Activated CD4-positive, alpha-beta T cell treated with anti-CD3 and anti-CD28 coated beads for 36 hours (primary cell): ENCODE measurements at regions of chr2 and their contacts with region 1.

Region 1: DNA sequence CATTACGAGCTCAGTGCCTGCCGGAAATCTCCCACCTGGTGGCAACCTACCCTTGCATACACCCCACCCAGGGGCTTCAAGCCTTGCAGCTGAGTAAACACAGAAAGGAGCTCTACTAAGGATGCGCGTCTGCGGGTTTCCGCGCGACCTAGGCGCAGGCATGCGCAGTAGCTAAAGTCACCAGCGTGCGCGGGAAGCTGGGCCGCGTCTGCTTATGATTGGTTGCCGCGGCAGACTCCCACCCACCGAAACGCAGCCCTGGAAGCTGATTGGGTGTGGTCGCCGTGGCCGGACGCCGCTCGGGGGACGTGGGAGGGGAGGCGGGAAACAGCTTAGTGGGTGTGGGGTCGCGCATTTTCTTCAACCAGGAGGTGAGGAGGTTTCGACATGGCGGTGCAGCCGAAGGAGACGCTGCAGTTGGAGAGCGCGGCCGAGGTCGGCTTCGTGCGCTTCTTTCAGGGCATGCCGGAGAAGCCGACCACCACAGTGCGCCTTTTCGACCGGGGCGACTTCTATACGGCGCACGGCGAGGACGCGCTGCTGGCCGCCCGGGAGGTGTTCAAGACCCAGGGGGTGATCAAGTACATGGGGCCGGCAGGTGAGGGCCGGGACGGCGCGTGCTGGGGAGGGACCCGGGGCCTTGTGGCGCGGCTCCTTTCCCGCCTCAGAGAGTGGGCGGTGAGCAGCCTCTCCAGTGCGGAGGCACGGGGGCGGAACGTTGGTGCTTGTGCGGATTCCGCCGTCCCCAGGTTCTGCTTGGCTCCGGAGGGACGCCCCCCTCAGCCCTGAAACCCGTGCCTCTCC is at the start of gene MSH2:
- DNase-seq: peak; percentile 96
- ATAC-seq: peak; percentile 95
- H3K4me3 Mint-ChIP-seq: peak within 1 kb of the TSS; percentile 84
- H3K27ac Mint-ChIP-seq: peak within 1 kb of the TSS; percentile 98
- H3K4me1 Mint-ChIP-seq: peaks cover 35% of the 10 kb centered on the region
- H3K27me3 Mint-ChIP-seq: no peaks in the 10 kb centered on the region
- total RNA-seq, gene MSH2: 61.0 to 65.2 TPM

Region 2: DNA sequence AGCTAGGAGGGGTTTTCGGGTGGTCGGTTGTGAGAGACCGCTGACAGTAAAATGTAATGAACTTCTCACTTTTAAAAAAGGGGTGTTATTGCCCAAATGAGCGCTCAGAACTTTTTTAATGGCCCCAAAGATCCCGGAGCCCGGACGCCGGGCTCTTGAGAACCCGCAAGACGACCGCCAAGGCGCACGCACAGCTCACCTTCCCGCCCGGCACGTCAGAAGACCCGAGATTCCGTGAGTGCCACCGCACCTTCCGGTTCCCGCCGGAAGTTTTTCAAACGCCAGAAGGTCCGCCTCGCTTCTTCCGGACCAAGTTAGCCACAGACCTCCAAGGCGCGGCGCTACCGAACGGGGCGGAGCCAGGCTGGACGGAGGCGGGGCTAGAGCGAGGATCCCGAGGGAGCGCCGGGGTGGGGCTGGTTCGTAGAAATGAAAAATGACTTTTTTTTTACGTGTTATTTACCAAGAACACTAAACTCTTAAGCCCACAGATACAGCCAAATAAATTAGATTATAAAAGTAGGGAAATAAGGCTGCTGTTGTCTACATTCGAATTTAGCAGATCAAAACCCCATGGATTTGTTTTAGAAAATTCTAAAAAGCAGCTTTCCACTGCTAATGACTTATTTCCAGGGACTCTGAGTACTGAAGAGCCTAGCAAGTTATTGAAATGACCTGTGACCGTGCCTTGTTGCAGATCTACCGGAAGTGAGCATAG is 1791.8 kb before region 1 on chr2 and contains the start of gene SRBD1:
- CTCF ChIA-PET with region 1: no interaction called
- POLR2A ChIA-PET with region 1: no interaction called
- intact Hi-C with region 1: loop called in 1 of 2 experiments (anchors 5 kb)
- DNase-seq: peak; percentile 96
- ATAC-seq: peak; percentile 97
- H3K4me3 Mint-ChIP-seq: peak within 1 kb of the TSS; percentile 93
- H3K27ac Mint-ChIP-seq: peak within 1 kb of the TSS; percentile 94
- H3K4me1 Mint-ChIP-seq: peaks cover 19% of the 10 kb centered on the region
- H3K27me3 Mint-ChIP-seq: no peaks in the 10 kb centered on the region
- total RNA-seq, gene SRBD1: 19.2 to 25.0 TPM

Region 3: GRCh38 chr2:46942139-46942517 is 460.9 kb before region 1 on chr2:
- CTCF ChIA-PET with region 1: interaction called, 3 read pairs
- POLR2A ChIA-PET with region 1: interaction called, 3 read pairs
- intact Hi-C with region 1: loop called in 1 of 2 experiments (anchors 2 kb)
- DNase-seq: peak; percentile 85
- ATAC-seq: peak; percentile 42
- H3K4me3 Mint-ChIP-seq: peak overlapping the region; percentile 94
- H3K27ac Mint-ChIP-seq: peak overlapping the region; percentile 98
- H3K4me1 Mint-ChIP-seq: peaks cover 45% of the 10 kb centered on the region
- H3K27me3 Mint-ChIP-seq: no peaks in the 10 kb centered on the region

Region 4: GRCh38 chr2:47520825-47521665 is 118.0 kb after region 1 on chr2:
- CTCF ChIA-PET with region 1: interaction called, 3 read pairs
- POLR2A ChIA-PET with region 1: no interaction called
- intact Hi-C with region 1: loop called (anchors 1 kb)
- DNase-seq: peak; percentile 87
- ATAC-seq: peak; percentile 87
- H3K4me3 Mint-ChIP-seq: peak overlapping the region; percentile 83
- H3K27ac Mint-ChIP-seq: peak overlapping the region; percentile 92
- H3K4me1 Mint-ChIP-seq: peaks cover 16% of the 10 kb centered on the region
- H3K27me3 Mint-ChIP-seq: no peaks in the 10 kb centered on the region

Region 5: GRCh38 chr2:47735136-47735869 is 332.3 kb after region 1 on chr2:
- CTCF ChIA-PET with region 1: no interaction called
- POLR2A ChIA-PET with region 1: interaction called, 14 read pairs
- intact Hi-C with region 1: no loop called
- DNase-seq: no peak
- ATAC-seq: no peak
- H3K4me3 Mint-ChIP-seq: no peak overlapping the region
- H3K27ac Mint-ChIP-seq: no peak overlapping the region
- H3K4me1 Mint-ChIP-seq: no peaks in the 10 kb centered on the region
- H3K27me3 Mint-ChIP-seq: no peaks in the 10 kb centered on the region

Region 6: DNA sequence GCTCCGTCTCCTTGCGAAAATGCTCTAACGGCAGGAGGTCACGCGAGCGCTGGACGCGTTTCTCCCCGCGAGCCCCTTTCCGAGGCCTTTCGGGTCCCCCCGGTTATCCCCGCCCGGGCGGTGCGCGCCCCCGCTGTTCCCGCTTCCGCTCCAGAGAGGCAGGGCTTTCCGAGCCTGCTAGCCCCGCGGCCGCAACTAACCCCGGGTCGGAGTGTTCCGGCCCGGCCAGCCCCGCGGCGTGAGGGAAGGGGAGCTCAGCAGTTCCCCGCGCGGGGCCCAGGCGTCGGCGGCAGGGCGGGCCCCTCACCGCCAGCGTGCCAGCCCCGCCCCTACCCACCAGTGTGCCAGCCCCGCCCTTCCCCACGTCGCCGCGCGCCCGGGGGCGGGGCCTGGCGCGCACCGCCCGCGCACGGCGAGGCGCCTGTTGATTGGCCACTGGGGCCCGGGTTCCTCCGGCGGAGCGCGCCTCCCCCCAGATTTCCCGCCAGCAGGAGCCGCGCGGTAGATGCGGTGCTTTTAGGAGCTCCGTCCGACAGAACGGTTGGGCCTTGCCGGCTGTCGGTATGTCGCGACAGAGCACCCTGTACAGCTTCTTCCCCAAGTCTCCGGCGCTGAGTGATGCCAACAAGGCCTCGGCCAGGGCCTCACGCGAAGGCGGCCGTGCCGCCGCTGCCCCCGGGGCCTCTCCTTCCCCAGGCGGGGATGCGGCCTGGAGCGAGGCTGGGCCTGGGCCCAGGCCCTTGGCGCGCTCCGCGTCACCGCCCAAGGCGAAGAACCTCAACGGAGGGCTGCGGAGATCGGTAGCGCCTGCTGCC is 379.9 kb after region 1 on chr2 and contains the start of gene MSH6:
- CTCF ChIA-PET with region 1: no interaction called
- POLR2A ChIA-PET with region 1: interaction called, 12 read pairs
- intact Hi-C with region 1: loop called (anchors 1 to 2 kb)
- DNase-seq: peak; percentile 93
- ATAC-seq: peak; percentile 92
- H3K4me3 Mint-ChIP-seq: peak within 1 kb of the TSS; percentile 84
- H3K27ac Mint-ChIP-seq: peak within 1 kb of the TSS; percentile 82
- H3K4me1 Mint-ChIP-seq: peaks cover 31% of the 10 kb centered on the region
- H3K27me3 Mint-ChIP-seq: no peaks in the 10 kb centered on the region
- total RNA-seq, gene MSH6: 119 to 166 TPM